ENCODE measurements at regions of chr2 and their contacts with region 1.

Region 1: GRCh38 chr2:105697781-105698449 is 46.8 kb upstream of the NCK2 start:
- DNase-seq: peak in 1 of 2 donors; percentile 32
- H3K4me3 ChIP-seq: no peak overlapping the region
- H3K27ac ChIP-seq: peak overlapping the region in 1 of 2 donors; percentile 35
- H3K4me1 ChIP-seq: no peaks in the 10 kb centered on the region
- H3K27me3 ChIP-seq: no peaks in the 10 kb centered on the region
- CTCF ChIP-seq: no peak
- POLR2A ChIP-seq: no peak

Region 2: DNA sequence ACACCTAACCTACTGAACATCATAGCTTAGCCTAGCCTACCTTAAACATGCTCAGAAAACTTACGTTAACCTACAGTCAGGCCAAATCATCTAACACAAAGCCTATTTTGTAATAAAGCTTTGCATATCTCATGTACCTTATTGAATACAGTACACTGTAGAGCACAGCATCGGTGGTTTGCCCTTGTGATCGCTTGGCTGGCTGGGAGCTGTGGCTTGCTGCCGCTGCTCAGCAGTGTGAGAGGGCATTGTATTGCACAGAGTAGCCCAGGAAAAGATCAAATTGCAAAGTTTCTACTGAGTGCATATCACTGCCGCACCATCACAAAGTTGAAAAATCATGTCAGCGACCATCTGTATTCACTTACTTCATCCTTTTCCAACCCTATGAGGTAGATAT is 15.5 kb before region 1 on chr2:
- intact Hi-C with region 1: loop called (anchors 2 kb)
- DNase-seq: no peak
- H3K4me3 ChIP-seq: no peak overlapping the region
- H3K27ac ChIP-seq: no peak overlapping the region
- H3K4me1 ChIP-seq: no peaks in the 10 kb centered on the region
- H3K27me3 ChIP-seq: no peaks in the 10 kb centered on the region
- CTCF ChIP-seq: no peak
- POLR2A ChIP-seq: no peak